Naive thymus-derived CD4-positive, alpha-beta T cell (primary cell): ENCODE measurements at regions of chr9 and their contacts with region 1.

Region 1: GRCh38 chr9:78121488-78121887 is 89.9 kb upstream of the GNAQ start:
- DNase-seq: peak in 7 of 9 donors; percentile 24 to 55 (median 37)
- ATAC-seq: peak; percentile 44
- H3K4me3 ChIP-seq: no peak overlapping the region
- H3K4me3 Mint-ChIP-seq: no peak overlapping the region
- H3K27ac ChIP-seq: no peak overlapping the region
- H3K27ac Mint-ChIP-seq: peak overlapping the region in 3 of 9 donors; percentile 44 to 94 (median 59)
- H3K4me1 ChIP-seq: peaks cover 17 to 32% of the 10 kb centered on the region in 2 donors
- H3K4me1 Mint-ChIP-seq: peaks cover 27 to 55% (median 47%) of the 10 kb centered on the region in 7 donors
- H3K27me3 ChIP-seq: no peaks in the 10 kb centered on the region
- H3K27me3 Mint-ChIP-seq: peaks cover 0 to 15% (median 0%) of the 10 kb centered on the region in 5 donors

Region 2: DNA sequence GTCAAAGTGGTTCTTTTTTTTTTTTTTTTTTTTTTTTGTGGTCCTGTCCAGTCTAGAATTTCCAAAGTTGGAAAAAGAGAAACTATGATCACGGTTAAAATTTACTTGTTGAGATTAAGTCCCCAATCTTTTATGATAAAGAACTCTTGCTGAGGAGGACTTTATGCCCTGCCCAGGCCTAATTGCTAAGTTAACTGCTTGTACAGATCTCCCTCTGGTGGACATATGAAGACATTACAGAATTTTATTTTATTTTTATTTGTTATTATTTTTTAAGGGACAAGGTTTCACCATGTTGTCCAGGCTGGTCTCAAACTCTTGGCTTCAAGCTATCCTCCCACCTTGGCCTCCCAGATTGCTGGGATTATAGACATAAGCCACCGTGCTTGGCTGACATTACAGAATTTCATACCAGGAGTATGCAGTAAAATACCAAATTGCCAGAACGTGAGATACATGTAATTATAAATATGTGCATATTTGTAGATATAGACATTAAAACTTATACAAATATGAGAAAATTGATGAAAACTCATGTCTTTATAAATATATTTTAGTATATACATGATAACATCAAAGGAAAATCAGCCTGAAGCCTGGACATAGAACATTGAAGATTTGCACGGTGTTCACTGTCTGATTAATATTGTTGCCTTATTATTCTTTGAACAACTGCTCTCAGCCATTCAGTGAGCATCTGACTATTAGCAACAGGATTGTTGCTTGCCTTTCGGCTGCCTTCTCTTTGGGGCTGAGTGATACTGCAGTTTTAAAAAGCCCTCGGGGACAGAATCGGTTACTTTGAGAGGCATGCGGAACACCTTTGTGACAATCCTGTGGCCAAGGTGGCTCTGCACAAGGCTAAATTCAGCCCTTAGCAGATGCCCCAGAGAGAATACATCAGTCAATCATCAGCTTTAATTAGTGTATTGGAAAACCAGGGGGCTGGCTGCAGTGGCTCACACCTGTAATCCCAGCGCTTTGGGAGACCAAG is 1818.2 kb before region 1 on chr9:
- CTCF ChIA-PET with region 1: no interaction called
- POLR2A ChIA-PET with region 1: no interaction called
- intact Hi-C with region 1: no loop called
- DNase-seq: peak in 6 of 9 donors; percentile 28 to 60 (median 54)
- ATAC-seq: peak; percentile 75
- H3K4me3 ChIP-seq: no peak overlapping the region
- H3K4me3 Mint-ChIP-seq: no peak overlapping the region
- H3K27ac ChIP-seq: no peak overlapping the region
- H3K27ac Mint-ChIP-seq: no peak overlapping the region
- H3K4me1 ChIP-seq: no peaks in the 10 kb centered on the region
- H3K4me1 Mint-ChIP-seq: peaks cover 0 to 3% (median 0%) of the 10 kb centered on the region in 7 donors
- H3K27me3 ChIP-seq: no peaks in the 10 kb centered on the region
- H3K27me3 Mint-ChIP-seq: peaks cover 0 to 17% (median 7%) of the 10 kb centered on the region in 5 donors

Region 3: DNA sequence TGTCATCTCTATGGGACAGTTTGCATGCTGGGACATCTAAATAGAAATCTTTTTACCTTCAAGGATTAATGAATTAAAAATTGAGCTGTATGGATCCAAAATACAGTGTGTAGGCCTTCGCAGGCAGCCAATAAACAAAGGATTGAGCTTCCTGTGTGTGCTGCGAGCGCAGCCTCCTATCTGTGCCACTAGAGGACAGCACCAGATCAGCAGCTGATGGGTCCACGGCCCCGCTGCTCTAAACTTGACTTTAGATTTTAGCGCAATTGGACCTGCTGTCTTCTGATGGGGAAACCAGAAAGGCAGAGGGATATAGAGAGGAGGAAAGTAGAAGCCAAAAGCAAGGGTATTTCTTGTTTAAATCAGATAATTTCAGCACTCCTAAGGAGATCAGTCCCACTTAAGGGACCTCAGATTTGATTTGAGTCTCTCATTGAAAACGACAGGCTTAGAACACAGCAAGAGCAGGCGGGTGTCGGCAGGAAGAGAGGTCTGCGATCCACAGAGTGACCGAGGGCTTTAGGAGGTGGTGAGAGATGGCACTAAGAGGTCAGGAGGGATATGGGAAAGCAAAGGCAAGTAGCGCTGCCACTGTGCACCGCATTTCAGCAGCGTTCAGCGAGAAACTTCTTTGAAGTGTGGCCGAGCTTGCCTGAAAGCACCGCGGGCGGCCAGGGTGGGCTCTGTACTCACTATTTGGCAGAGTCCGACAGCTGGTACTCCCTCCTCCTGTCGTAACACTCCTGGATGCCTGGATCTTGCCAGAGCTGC is 687.6 kb before region 1 on chr9:
- CTCF ChIA-PET with region 1: no interaction called
- POLR2A ChIA-PET with region 1: no interaction called
- intact Hi-C with region 1: loop called (anchors 1 to 2 kb)
- DNase-seq: peak; percentile 24 to 62 (median 46)
- ATAC-seq: peak; percentile 90
- H3K4me3 ChIP-seq: no peak overlapping the region
- H3K4me3 Mint-ChIP-seq: peak overlapping the region in 3 of 10 donors; percentile 9 to 70 (median 29)
- H3K27ac ChIP-seq: no peak overlapping the region
- H3K27ac Mint-ChIP-seq: no peak overlapping the region
- H3K4me1 ChIP-seq: no peaks in the 10 kb centered on the region
- H3K4me1 Mint-ChIP-seq: peaks cover 4 to 6% (median 4%) of the 10 kb centered on the region in 7 donors
- H3K27me3 ChIP-seq: no peaks in the 10 kb centered on the region
- H3K27me3 Mint-ChIP-seq: peaks cover 0 to 8% (median 0%) of the 10 kb centered on the region in 5 donors

Region 4: GRCh38 chr9:77751341-77752091 is 370.0 kb before region 1 on chr9:
- CTCF ChIA-PET with region 1: no interaction called
- POLR2A ChIA-PET with region 1: no interaction called
- intact Hi-C with region 1: loop called in 1 of 2 experiments (anchors 10 kb)
- DNase-seq: peak in 6 of 9 donors; percentile 4 to 28 (median 22)
- ATAC-seq: peak; percentile 57
- H3K4me3 ChIP-seq: no peak overlapping the region
- H3K4me3 Mint-ChIP-seq: no peak overlapping the region
- H3K27ac ChIP-seq: no peak overlapping the region
- H3K27ac Mint-ChIP-seq: peak overlapping the region in 5 of 9 donors; percentile 4 to 86 (median 29)
- H3K4me1 ChIP-seq: no peaks in the 10 kb centered on the region
- H3K4me1 Mint-ChIP-seq: peaks cover 15 to 34% (median 28%) of the 10 kb centered on the region in 7 donors
- H3K27me3 ChIP-seq: no peaks in the 10 kb centered on the region
- H3K27me3 Mint-ChIP-seq: no peaks in the 10 kb centered on the region

Region 5: GRCh38 chr9:77977210-77977611 is 144.3 kb before region 1 on chr9:
- CTCF ChIA-PET with region 1: interaction called, 40 read pairs
- POLR2A ChIA-PET with region 1: interaction called, 3 read pairs
- intact Hi-C with region 1: loop called (anchors 1 kb)
- DNase-seq: peak; percentile 12 to 58 (median 47)
- ATAC-seq: peak; percentile 78
- H3K4me3 ChIP-seq: peak overlapping the region; percentile 2
- H3K4me3 Mint-ChIP-seq: peak overlapping the region in 9 of 10 donors; percentile 29 to 77 (median 60)
- H3K27ac ChIP-seq: peak overlapping the region; percentile 20
- H3K27ac Mint-ChIP-seq: peak overlapping the region; percentile 57 to 87 (median 78)
- H3K4me1 ChIP-seq: peaks cover 23 to 45% of the 10 kb centered on the region in 2 donors
- H3K4me1 Mint-ChIP-seq: peaks cover 41 to 76% (median 62%) of the 10 kb centered on the region in 7 donors
- H3K27me3 ChIP-seq: no peaks in the 10 kb centered on the region
- H3K27me3 Mint-ChIP-seq: no peaks in the 10 kb centered on the region

Region 6: GRCh38 chr9:78103971-78104433 is 17.5 kb before region 1 on chr9:
- CTCF ChIA-PET with region 1: no interaction called
- POLR2A ChIA-PET with region 1: no interaction called
- intact Hi-C with region 1: loop called in 1 of 2 experiments (anchors 1 kb)
- DNase-seq: peak in 5 of 9 donors; percentile 17 to 38 (median 23)
- ATAC-seq: peak; percentile 90
- H3K4me3 ChIP-seq: no peak overlapping the region
- H3K4me3 Mint-ChIP-seq: peak overlapping the region in 8 of 10 donors; percentile 46 to 73 (median 60)
- H3K27ac ChIP-seq: no peak overlapping the region
- H3K27ac Mint-ChIP-seq: peak overlapping the region in 6 of 9 donors; percentile 46 to 85 (median 68)
- H3K4me1 ChIP-seq: peaks cover 0 to 7% of the 10 kb centered on the region in 2 donors
- H3K4me1 Mint-ChIP-seq: peaks cover 18 to 54% (median 48%) of the 10 kb centered on the region in 7 donors
- H3K27me3 ChIP-seq: no peaks in the 10 kb centered on the region
- H3K27me3 Mint-ChIP-seq: peaks cover 0 to under 1% (median 0%) of the 10 kb centered on the region in 5 donors